RWPE1 (cell line): ENCODE measurements at regions of chr9 and their contacts with region 1.

Region 1: DNA sequence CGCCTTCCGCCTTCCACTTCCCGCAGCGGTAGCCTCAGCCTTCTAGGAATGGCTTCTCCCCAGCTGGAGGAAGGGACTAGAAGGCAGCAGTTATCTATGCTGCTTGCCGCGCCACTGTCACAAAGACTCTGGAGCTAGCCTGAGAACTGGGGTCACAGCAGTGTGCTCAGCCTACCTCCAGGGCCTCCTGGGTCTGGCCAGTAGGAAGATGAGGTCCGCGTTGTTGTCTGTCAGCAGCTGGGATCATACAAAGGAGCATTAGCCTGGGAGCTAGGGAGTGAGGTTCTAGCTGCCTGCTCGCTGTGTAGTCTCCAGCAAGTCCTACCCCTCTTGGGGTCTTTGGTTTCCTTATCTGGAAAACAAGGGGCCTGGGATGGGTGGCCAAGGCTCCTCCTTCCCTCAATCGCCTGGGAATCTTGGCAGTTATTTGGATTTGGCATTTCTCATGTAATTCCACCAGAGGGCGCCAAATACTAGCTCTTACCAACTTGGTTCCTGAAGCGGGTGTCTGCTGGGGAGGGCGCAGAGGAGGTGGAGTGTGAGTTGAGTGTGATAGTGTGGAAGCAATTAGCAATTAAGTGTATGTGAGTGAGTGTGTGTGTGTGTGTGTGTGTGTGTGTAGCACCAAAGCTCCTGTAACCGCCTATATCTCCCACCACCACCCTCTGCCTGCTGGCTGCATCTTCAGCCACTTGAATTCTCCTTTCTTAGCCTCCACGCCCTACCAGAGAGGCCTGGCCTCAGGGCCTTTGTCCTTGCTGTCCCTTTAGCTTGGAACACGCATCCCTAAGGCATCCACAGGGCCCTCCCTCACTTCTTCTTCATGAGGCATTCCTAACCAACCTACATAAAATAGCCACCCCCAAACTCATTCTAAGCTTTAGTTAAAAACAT is 97.1 kb downstream of the ENTREP1 start:
- DNase-seq: peak; percentile 81
- H3K27ac ChIP-seq: no peak overlapping the region
- CTCF ChIP-seq: peak; percentile 69

Region 2: DNA sequence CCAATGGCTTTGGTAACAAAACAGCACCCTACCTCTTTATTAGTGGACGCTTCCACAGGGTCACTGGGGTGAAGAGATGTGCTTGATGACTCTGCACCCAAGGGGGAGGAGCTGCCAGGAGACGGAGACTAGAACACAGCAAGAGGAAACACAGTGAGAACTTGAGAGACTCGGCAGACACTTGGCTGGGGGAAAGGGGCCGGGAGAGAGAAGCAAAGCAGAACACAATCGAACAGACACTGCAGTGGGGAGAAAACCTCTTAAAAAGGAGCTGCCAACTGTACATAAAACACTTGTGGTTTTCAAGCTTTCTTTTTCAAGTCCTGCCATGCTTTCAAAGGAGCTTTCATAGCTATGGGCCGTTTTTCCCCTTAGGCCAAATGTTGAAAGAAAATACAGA is 53.9 kb after region 1 on chr9:
- CTCF ChIA-PET with region 1: no interaction called
- POLR2A ChIA-PET with region 1: no interaction called
- DNase-seq: no peak
- H3K27ac ChIP-seq: no peak overlapping the region
- CTCF ChIP-seq: no peak

Region 3: GRCh38 chr9:69549310-69550202 is 127.4 kb after region 1 on chr9:
- CTCF ChIA-PET with region 1: interaction called, 26 read pairs
- POLR2A ChIA-PET with region 1: no interaction called
- DNase-seq: peak; percentile 72
- H3K27ac ChIP-seq: no peak overlapping the region
- CTCF ChIP-seq: peak; percentile 88

Region 4: DNA sequence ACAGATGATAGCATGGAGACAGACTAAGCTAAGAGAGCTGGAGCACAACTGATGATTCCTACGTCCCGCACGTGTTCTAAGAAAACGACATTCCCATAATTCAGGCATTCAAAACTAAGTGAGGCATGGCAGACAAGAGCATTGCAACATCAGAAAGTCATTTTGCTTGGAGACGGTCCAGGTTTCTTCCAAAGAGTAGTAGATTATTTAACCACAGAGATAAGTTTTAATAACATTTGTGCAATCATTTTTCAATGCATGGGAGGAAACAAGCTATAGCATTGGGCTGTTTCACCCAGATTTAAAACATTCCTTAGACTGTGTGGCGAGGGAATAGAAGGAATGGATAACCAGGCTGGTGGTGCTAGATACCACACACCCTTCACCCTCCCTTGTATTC is 132.8 kb after region 1 on chr9:
- CTCF ChIA-PET with region 1: interaction called, 26 read pairs
- POLR2A ChIA-PET with region 1: no interaction called
- DNase-seq: no peak
- H3K27ac ChIP-seq: no peak overlapping the region
- CTCF ChIP-seq: no peak